ENCODE measurements at regions of chr3 and their contacts with region 1.

Region 1: DNA sequence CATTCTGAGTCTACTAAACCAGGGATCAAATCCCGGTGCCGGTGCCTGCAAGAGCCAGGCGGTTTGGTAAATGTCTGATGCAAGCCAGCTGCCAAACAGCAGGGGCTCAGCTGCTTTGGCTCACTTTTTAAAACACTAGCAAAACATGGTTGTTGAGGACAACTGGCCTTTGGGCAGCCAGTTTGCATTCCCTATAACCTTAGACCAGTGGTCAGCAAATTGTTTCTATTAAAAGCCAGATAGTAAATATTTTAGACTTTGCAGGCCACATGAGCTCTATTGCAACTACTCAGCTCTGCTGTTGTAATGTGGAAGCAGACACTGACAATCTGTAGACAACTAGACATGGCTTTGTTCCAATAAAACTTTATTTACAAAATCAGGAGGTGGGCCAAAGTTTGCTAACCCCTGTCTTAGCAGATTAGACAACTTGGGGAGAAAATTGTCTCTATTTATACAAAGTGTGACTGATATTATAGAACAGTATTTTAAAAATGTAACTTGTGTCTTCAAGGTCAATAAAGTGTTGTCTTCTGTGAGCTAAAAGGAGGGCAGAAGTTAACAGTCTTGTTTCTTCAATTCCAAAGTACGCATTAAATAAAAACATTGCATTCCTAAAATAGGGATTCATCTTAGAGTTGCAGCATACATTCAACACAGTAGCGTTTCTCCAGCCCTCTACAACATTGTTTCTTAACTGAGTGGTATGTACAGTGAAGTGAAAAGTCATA is 67.6 kb downstream of the SSUH2 start:
- DNase-seq: peak; percentile 91
- H3K4me3 ChIP-seq: no peak overlapping the region
- H3K27ac ChIP-seq: peak overlapping the region; percentile 94
- H3K27me3 ChIP-seq: no peaks in the 10 kb centered on the region
- CTCF ChIP-seq: no peak

Region 2: GRCh38 chr3:8482960-8483665 is 93.9 kb before region 1 on chr3:
- CTCF ChIA-PET with region 1: no interaction called
- POLR2A ChIA-PET with region 1: interaction called, 11 read pairs
- DNase-seq: peak; percentile 90
- H3K4me3 ChIP-seq: no peak overlapping the region
- H3K27ac ChIP-seq: peak overlapping the region; percentile 47
- H3K27me3 ChIP-seq: no peaks in the 10 kb centered on the region
- CTCF ChIP-seq: no peak

Region 3: GRCh38 chr3:8555113-8555661 is 21.8 kb before region 1 on chr3:
- CTCF ChIA-PET with region 1: interaction called, 6 read pairs
- POLR2A ChIA-PET with region 1: interaction called, 20 read pairs
- DNase-seq: peak; percentile 74
- H3K4me3 ChIP-seq: no peak overlapping the region
- H3K27ac ChIP-seq: peak overlapping the region; percentile 92
- H3K27me3 ChIP-seq: no peaks in the 10 kb centered on the region
- CTCF ChIP-seq: no peak

Region 4: GRCh38 chr3:8593026-8593827 is 16.2 kb after region 1 on chr3:
- CTCF ChIA-PET with region 1: interaction called, 3 read pairs
- POLR2A ChIA-PET with region 1: interaction called, 13 read pairs
- DNase-seq: no peak
- H3K4me3 ChIP-seq: no peak overlapping the region
- H3K27ac ChIP-seq: no peak overlapping the region
- H3K27me3 ChIP-seq: no peaks in the 10 kb centered on the region
- CTCF ChIP-seq: no peak